Psoas muscle (tissue), 8 donors: ENCODE measurements at regions of chr17 and their contacts with region 1.

Region 1: GRCh38 chr17:46044286-46044928 is 45.4 kb downstream of the STH start:
- DNase-seq: peak in 1 of 2 donors; percentile 53
- ATAC-seq: peak; percentile 83 to 86 (median 85)
- H3K4me3 ChIP-seq: no peak overlapping the region
- H3K27ac ChIP-seq: peak overlapping the region; percentile 75
- H3K4me1 ChIP-seq: peaks cover 51% of the 10 kb centered on the region
- H3K27me3 ChIP-seq: no peaks in the 10 kb centered on the region
- CTCF ChIP-seq: peak; percentile 86

Region 2: GRCh38 chr17:46002311-46002972 is 42.0 kb before region 1 on chr17:
- intact Hi-C with region 1: loop called in 1 of 2 experiments (anchors 5 kb)
- DNase-seq: peak; percentile 65 to 71
- ATAC-seq: peak; percentile 77 to 89 (median 84)
- H3K4me3 ChIP-seq: no peak overlapping the region
- H3K27ac ChIP-seq: peak overlapping the region; percentile 30
- H3K4me1 ChIP-seq: peaks cover 19% of the 10 kb centered on the region
- H3K27me3 ChIP-seq: no peaks in the 10 kb centered on the region
- CTCF ChIP-seq: peak; percentile 96

Region 3: GRCh38 chr17:46108550-46109110 is 64.2 kb after region 1 on chr17:
- intact Hi-C with region 1: no loop called
- DNase-seq: no peak
- ATAC-seq: peak; percentile 52 to 77 (median 71)
- H3K4me3 ChIP-seq: no peak overlapping the region
- H3K27ac ChIP-seq: peak overlapping the region; percentile 46
- H3K4me1 ChIP-seq: peaks cover 62% of the 10 kb centered on the region
- H3K27me3 ChIP-seq: no peaks in the 10 kb centered on the region
- CTCF ChIP-seq: no peak

Region 4: GRCh38 chr17:46193626-46194392 is 149.4 kb after region 1 on chr17:
- intact Hi-C with region 1: loop called (anchors 2 to 5 kb)
- DNase-seq: peak; percentile 99 to 100
- ATAC-seq: peak; percentile 90 to 95 (median 92)
- H3K4me3 ChIP-seq: peak overlapping the region; percentile 76
- H3K27ac ChIP-seq: peak overlapping the region; percentile 98
- H3K4me1 ChIP-seq: peaks cover 40% of the 10 kb centered on the region
- H3K27me3 ChIP-seq: no peaks in the 10 kb centered on the region
- CTCF ChIP-seq: no peak

Region 5: GRCh38 chr17:46212634-46213435 is 168.4 kb after region 1 on chr17:
- intact Hi-C with region 1: loop called (anchors 1 to 5 kb)
- DNase-seq: no peak
- ATAC-seq: peak; percentile 72 to 88 (median 80)
- H3K4me3 ChIP-seq: peak overlapping the region; percentile 7
- H3K27ac ChIP-seq: peak overlapping the region; percentile 19
- H3K4me1 ChIP-seq: peaks cover 19% of the 10 kb centered on the region
- H3K27me3 ChIP-seq: no peaks in the 10 kb centered on the region
- CTCF ChIP-seq: peak; percentile 81

Region 6: DNA sequence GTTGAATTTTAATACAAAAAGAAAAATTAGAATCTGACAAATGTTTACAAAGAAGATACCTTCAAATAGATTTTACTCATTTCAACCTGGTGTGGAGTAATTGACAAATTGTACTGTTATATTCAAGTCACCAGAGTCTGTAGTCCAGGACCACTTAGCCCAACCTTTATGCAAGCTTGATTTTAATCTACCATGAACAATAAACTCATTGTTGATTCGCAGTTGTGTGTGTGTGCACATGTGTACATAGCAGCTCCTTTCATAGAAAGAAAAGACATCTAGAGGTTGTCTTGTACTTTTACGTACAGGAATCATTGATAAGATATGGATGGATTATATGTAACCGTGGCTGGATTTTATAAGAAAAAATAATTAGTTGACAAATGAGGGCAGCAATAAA is 229.8 kb after region 1 on chr17:
- intact Hi-C with region 1: no loop called
- DNase-seq: no peak
- ATAC-seq: no peak
- H3K4me3 ChIP-seq: no peak overlapping the region
- H3K27ac ChIP-seq: no peak overlapping the region
- H3K4me1 ChIP-seq: no peaks in the 10 kb centered on the region
- H3K27me3 ChIP-seq: no peaks in the 10 kb centered on the region
- CTCF ChIP-seq: no peak